ENCODE measurements at regions of chr2 and their contacts with region 1.

Region 1: DNA sequence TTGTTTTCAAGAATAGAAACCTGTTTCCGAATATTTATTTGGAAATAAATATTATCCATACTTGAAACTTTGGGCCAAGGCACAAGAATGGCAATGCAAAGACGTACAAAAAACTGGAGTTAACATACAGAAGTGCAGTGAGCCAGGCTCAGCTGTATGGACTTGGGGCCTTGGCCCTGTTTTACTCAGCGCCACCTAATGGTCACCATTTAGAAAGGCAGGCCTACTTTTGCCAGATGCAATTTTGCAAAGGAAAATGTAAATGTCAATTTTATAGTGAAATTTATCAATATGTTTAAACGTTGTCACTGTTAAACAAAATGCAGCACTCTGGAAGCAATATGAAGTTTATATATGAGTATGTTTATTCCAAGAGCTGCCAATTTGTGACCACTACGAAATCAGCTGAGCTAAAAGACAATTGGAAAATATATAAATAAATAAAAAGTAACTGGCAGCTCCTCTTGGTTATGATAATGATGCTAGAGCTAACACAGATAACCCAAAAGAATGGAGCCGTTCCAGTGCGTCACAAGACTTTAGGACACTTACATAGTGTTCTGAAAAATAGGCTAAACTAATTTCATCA is 155.0 kb downstream of the ARHGAP15 start:
- DNase-seq: peak; percentile 40
- H3K4me3 ChIP-seq: no peak overlapping the region
- H3K27ac ChIP-seq: no peak overlapping the region
- H3K4me1 ChIP-seq: no peaks in the 10 kb centered on the region
- H3K27me3 ChIP-seq: no peaks in the 10 kb centered on the region
- CTCF ChIP-seq: peak; percentile 78 to 84
- POLR2A ChIP-seq: no peak

Region 2: GRCh38 chr2:143264851-143265250 is 19.3 kb before region 1 on chr2:
- CTCF ChIA-PET with region 1: interaction called, 14 read pairs
- POLR2A ChIA-PET with region 1: no interaction called
- dilution Hi-C with region 1: no loop called
- intact Hi-C with region 1: no loop called
- DNase-seq: no peak
- H3K4me3 ChIP-seq: no peak overlapping the region
- H3K27ac ChIP-seq: no peak overlapping the region
- H3K4me1 ChIP-seq: no peaks in the 10 kb centered on the region
- H3K27me3 ChIP-seq: no peaks in the 10 kb centered on the region
- CTCF ChIP-seq: no peak
- POLR2A ChIP-seq: no peak

Region 3: GRCh38 chr2:143296089-143296488 is 11.9 kb after region 1 on chr2:
- CTCF ChIA-PET with region 1: interaction called, 16 read pairs
- POLR2A ChIA-PET with region 1: no interaction called
- dilution Hi-C with region 1: no loop called
- intact Hi-C with region 1: no loop called
- DNase-seq: no peak
- H3K4me3 ChIP-seq: no peak overlapping the region
- H3K27ac ChIP-seq: no peak overlapping the region
- H3K4me1 ChIP-seq: no peaks in the 10 kb centered on the region
- H3K27me3 ChIP-seq: peaks cover 1 to 2% of the 10 kb centered on the region in 2 experiments
- CTCF ChIP-seq: no peak
- POLR2A ChIP-seq: no peak

Region 4: GRCh38 chr2:143874528-143875070 is 590.4 kb after region 1 on chr2:
- CTCF ChIA-PET with region 1: no interaction called
- POLR2A ChIA-PET with region 1: no interaction called
- dilution Hi-C with region 1: no loop called
- intact Hi-C with region 1: no loop called
- DNase-seq: no peak
- H3K4me3 ChIP-seq: no peak overlapping the region
- H3K27ac ChIP-seq: no peak overlapping the region
- H3K4me1 ChIP-seq: no peaks in the 10 kb centered on the region
- H3K27me3 ChIP-seq: no peaks in the 10 kb centered on the region
- CTCF ChIP-seq: no peak
- POLR2A ChIP-seq: no peak

Measured in endothelial cell of umbilical vein (primary cell).